ENCODE measurements at regions of chr11 and their contacts with region 1.

Region 1: GRCh38 chr11:118145285-118146227 is 7.1 kb downstream of the SCN4B start:
- DNase-seq: peak; percentile 74 to 97 (median 86)

Region 2: DNA sequence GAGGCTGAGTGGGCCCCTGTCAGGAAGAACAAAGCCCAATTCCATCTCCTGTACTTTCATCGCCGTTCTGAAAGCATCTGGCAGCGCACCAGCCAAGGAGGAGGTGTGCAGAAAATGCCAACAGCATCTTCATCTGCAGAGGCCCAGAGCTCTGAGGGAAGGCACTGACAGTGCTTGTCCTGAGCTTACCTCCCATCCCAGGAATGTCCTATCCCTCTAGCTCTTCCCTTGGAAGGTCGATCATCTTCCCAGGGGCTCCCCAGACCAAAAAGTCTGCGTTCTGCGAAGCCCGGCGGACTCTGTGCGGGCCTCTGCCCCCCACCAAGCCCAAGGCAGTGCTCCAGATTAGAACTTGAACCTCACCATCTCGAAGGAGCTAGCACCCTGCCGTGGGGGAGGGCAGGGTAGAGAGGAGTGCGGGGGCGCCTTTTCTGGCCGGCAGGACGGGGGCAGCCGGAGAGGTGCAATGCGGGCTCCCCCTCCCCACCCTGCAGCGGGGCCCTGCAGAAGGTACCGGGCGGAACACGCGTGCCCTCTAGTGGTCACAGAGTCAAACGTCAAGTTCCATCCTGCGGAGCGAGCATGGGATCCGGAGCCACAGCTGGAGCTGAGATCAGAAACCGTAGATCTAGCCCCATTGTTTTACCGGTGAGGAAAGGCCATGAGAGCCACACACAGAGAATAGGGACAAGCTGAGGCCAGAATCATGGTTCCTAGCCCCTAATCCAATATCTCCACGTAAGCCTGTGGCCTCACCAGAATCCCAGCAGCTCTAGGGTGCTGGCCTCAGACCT is 25.9 kb after region 1 on chr11:
- intact Hi-C with region 1: loop called (anchors 1 kb)
- DNase-seq: peak; percentile 80 to 98 (median 89)

Region 3: DNA sequence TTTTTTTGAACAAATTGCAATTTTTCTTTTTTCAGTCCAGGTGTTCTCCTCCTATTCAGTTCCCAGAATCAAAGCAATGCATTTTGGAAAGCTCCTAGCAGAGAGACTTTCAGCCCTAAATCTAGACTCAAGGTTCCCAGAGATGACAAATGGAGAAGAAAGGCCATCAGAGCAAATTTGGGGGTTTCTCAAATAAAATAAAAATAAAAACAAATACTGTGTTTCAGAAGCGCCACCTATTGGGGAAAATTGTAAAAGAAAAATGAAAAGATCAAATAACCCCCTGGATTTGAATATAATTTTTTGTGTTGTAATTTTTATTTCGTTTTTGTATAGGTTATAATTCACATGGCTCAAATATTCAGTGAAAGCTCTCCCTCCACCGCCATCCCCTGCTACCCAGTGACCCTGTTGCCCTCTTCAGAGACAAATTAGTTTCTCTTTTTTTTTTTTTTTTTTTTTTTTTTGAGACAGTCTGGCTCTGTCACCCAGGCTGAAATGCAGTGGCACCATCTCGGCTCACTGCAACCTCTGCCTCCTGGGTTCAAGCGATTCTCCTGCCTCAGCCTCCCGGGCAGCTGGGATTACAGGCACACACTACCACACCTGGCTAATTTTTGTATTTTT is 207.6 kb after region 1 on chr11:
- intact Hi-C with region 1: loop called (anchors 2 kb)
- DNase-seq: no peak

Region 4: DNA sequence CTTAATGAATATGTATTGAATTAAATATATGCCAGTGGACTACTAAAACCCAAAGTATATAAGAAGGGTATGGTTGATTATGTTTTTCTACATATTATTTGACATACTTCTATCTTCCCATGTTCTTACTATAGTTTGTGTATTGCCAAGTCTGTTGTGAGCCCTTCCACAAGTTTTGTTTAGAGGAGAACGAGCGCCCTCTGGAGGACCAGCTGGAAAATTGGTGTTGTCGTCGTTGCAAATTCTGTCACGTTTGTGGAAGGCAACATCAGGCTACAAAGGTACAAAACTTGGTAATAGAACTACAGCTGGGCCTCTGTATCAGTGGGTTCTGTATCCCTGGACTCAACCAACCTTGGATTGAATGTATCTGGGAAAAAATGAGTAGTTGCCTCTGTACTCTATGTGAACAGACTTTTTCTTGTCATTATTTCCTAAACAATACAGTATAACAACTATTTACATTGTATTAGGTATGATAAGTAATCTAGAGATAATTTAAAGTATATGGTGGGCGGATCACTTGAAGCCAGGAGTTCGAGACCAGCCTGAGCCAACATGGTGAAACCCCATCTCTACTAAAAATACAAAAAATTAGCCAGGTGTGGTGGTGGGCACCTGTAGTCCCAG is 343.0 kb after region 1 on chr11:
- intact Hi-C with region 1: loop called (anchors 5 kb)
- DNase-seq: peak; percentile 37 to 95 (median 68)

Region 5: DNA sequence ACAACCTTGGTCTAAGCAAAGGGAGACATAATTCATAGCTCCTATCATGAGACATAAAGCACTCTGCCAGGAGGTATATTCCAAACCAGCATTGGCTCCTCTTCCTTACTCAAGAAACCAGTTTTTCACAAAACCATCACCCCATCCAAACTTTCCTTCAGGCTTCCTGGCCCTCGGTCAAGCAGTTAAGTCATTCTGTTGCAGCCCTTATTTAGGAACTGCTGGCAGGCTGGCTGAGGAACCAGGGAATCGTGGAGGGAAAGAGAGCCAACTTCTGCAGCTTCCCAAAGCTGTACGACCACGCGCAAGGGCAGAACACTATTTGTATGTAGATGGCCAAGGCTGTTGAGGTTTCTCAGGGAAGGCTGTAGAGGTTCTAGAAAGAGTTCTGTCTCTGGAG is 419.5 kb after region 1 on chr11:
- intact Hi-C with region 1: loop called (anchors 5 kb)
- DNase-seq: peak in 2 of 10 donors; percentile 12 to 20